H1 (cell line): ENCODE measurements at regions of chr10 and their contacts with region 1.

Region 1: DNA sequence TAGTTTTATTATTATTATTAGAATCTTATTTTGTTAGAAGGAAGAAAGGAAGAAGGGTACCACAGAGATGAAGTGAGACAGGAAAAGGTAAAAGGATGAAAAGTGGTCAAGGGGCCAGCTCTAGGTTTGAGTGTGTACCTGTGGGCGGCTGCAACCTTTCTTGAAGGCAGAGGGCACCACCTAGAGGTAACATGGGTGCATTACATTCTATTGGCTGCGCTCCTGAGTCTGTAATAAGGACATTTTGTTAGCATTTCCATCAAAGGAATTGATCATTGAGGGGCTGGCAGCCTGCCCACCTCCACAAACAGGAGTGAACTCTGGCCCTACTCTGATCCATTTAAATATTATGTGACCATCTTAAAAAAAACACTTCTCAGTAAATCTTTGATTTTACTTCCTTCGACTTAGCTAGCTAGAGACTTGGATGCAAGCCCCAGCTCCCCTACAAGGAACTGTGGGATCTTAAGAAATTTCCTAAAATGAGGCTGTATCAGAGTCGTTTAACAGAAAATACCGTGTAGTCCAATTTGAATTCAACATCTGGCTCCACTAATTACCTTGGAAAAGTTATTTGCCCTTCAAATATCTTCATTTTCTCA is 610.4 kb downstream of the IPMK start:
- DNase-seq: peak; percentile 54 to 76
- H3K4me3 ChIP-seq: no peak overlapping the region
- H3K27ac ChIP-seq: no peak overlapping the region
- H3K4me1 ChIP-seq: no peaks in the 10 kb centered on the region; a peak in 1 of 7 replicates
- H3K27me3 ChIP-seq: no peaks in the 10 kb centered on the region
- CTCF ChIP-seq: peak; percentile 66 to 89 (median 87)
- EP300 ChIP-seq: no peak
- POLR2A ChIP-seq: no peak
- RAD21 ChIP-seq: peak; percentile 95 to 96

Region 2: GRCh38 chr10:57338823-57339558 is 318.3 kb before region 1 on chr10:
- CTCF ChIA-PET with region 1: interaction called, 27 read pairs
- POLR2A ChIA-PET with region 1: no interaction called
- DNase-seq: peak in 1 of 2 experiments; percentile 44
- H3K4me3 ChIP-seq: no peak overlapping the region
- H3K27ac ChIP-seq: no peak overlapping the region
- H3K4me1 ChIP-seq: no peaks in the 10 kb centered on the region
- H3K27me3 ChIP-seq: no peaks in the 10 kb centered on the region
- CTCF ChIP-seq: peak in 2 of 3 experiments; percentile 57 to 58; a peak in 2 of 4 replicates
- EP300 ChIP-seq: no peak
- POLR2A ChIP-seq: no peak
- RAD21 ChIP-seq: peak; percentile 63 to 77

Region 3: GRCh38 chr10:57579926-57580325 is 77.3 kb before region 1 on chr10:
- CTCF ChIA-PET with region 1: interaction called, 160 read pairs
- POLR2A ChIA-PET with region 1: no interaction called
- DNase-seq: peak in 1 of 2 experiments; percentile 21
- H3K4me3 ChIP-seq: no peak overlapping the region
- H3K27ac ChIP-seq: no peak overlapping the region
- H3K4me1 ChIP-seq: no peaks in the 10 kb centered on the region
- H3K27me3 ChIP-seq: no peaks in the 10 kb centered on the region
- CTCF ChIP-seq: peak; percentile 3 to 75 (median 74)
- EP300 ChIP-seq: no peak
- POLR2A ChIP-seq: no peak
- RAD21 ChIP-seq: peak; percentile 94

Region 4: DNA sequence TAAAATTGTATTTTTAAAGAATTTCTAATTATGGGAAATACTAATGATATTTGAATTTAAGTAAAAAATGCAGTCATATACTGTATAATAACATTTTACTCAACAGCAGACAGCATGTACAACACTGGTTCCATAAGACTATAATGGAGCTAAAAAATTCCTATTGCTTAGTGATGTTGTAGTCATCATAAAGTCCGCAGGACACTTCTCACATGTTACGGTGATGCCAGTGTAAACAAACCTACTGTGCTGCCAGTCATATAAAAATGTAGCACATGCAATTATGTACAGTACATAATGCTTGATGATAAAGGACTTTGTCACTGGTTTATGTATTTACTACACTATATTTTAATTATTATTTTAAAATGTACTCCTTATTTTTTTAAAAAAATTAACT is 18.9 kb before region 1 on chr10:
- CTCF ChIA-PET with region 1: interaction called, 19 read pairs
- POLR2A ChIA-PET with region 1: no interaction called
- DNase-seq: no peak
- H3K4me3 ChIP-seq: no peak overlapping the region
- H3K27ac ChIP-seq: no peak overlapping the region
- H3K4me1 ChIP-seq: no peaks in the 10 kb centered on the region
- H3K27me3 ChIP-seq: peaks cover 0 to 1% (median 0%) of the 10 kb centered on the region in 4 experiments; a peak in 1 of 7 replicates
- CTCF ChIP-seq: no peak
- EP300 ChIP-seq: no peak
- POLR2A ChIP-seq: no peak
- RAD21 ChIP-seq: no peak

Region 5: DNA sequence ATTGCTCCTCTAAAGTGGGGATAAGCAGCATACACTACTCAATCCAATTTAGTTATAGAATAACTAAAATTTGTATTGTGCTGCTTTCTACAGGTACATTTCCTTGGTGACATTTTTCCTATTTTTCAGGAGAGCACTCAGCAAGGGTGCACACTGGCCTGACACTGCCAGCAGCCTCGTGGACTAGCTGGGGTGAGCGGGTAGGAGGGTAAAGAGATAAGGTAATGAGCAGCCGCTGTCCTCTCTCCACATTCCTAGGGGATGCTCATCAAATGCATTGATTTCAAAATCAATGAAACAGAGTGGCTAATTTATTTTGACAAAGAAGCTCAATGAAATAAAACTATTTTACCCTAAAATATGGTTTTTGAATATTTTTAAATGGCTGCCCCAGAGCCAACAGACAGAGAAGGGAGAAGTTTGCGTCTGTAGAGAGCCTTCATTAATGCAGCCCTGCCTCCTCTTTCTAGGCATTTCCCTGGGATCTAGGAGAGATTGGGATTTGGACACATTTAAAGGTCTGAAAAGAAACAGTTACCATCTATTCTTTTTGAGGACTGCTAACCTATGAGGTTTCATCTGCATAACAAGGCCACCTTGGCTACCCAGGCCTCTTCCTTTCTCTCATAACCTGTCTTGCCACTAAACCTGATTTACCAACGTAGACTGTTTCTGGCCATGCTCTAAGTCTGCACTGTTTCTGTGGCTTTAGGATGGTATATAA is 49.5 kb after region 1 on chr10:
- CTCF ChIA-PET with region 1: no interaction called
- POLR2A ChIA-PET with region 1: no interaction called
- DNase-seq: no peak
- H3K4me3 ChIP-seq: peak overlapping the region in 1 of 4 experiments; percentile 3; a peak in 2 of 8 replicates
- H3K27ac ChIP-seq: no peak overlapping the region
- H3K4me1 ChIP-seq: peaks cover 0 to 8% (median 2%) of the 10 kb centered on the region in 4 experiments; a peak in 3 of 7 replicates
- H3K27me3 ChIP-seq: no peaks in the 10 kb centered on the region
- CTCF ChIP-seq: no peak
- EP300 ChIP-seq: no peak
- POLR2A ChIP-seq: no peak
- RAD21 ChIP-seq: no peak

Region 6: GRCh38 chr10:57791546-57791945 is 134.3 kb after region 1 on chr10:
- CTCF ChIA-PET with region 1: no interaction called
- POLR2A ChIA-PET with region 1: no interaction called
- DNase-seq: no peak
- H3K4me3 ChIP-seq: no peak overlapping the region
- H3K27ac ChIP-seq: no peak overlapping the region
- H3K4me1 ChIP-seq: peaks cover 0 to 5% (median 1%) of the 10 kb centered on the region in 4 experiments; a peak in 4 of 7 replicates
- H3K27me3 ChIP-seq: no peaks in the 10 kb centered on the region
- CTCF ChIP-seq: no peak
- EP300 ChIP-seq: no peak
- POLR2A ChIP-seq: no peak
- RAD21 ChIP-seq: no peak

Region 7: GRCh38 chr10:57849691-57850357 is 192.6 kb after region 1 on chr10:
- CTCF ChIA-PET with region 1: interaction called, 19 read pairs
- POLR2A ChIA-PET with region 1: no interaction called
- DNase-seq: no peak
- H3K4me3 ChIP-seq: no peak overlapping the region
- H3K27ac ChIP-seq: no peak overlapping the region
- H3K4me1 ChIP-seq: 0 out of 7 replicates have a peak, but pooled peaks cover 0 to 2% (median 0%) of the 10 kb centered on the region in 4 experiments
- H3K27me3 ChIP-seq: no peaks in the 10 kb centered on the region
- CTCF ChIP-seq: peak in 1 of 3 experiments; percentile 40; a peak in 1 of 4 replicates
- EP300 ChIP-seq: no peak
- POLR2A ChIP-seq: no peak
- RAD21 ChIP-seq: peak; percentile 49 to 61

Region 8: DNA sequence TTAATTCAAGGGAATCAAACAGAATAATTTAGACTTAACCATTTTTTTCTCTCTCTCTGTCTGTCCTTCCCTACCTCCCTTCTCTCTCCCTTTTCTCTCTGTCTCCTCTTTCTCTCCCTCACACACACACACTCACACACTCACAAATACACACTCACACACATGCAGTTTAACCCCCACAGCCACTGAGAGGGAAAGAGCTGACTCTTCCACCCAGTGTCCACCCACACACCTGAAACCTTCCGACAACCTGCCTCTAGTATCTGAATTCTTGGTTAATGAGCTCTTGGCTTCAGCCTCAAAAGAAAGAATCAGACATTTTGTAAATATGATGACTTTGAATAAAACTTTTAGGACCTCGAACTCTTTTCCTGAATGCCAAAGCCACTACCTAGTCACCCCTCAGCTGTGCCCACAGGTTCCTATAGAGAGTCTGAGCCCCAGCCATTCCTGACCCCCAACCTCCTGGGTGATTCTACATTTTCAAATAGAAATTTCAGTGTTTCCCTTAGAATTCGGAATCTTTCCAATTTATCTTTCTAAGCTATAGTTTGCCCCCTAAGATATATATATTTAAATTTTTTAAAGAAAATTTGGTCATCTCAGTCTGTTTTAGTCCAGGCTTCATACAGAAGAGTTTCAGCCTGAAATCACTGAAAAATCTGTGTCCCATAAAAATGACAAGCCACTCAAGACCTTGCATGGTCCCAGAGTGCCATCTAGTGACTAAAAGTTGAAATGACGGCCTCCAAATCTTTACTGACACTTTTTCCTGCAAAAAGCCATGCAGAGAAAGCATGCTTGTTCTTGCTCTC is 407.7 kb after region 1 on chr10:
- CTCF ChIA-PET with region 1: interaction called, 48 read pairs
- POLR2A ChIA-PET with region 1: no interaction called
- DNase-seq: peak in 1 of 2 experiments; percentile 52
- H3K4me3 ChIP-seq: no peak overlapping the region
- H3K27ac ChIP-seq: no peak overlapping the region
- H3K4me1 ChIP-seq: peaks cover 0 to 9% (median 7%) of the 10 kb centered on the region in 4 experiments; a peak in 6 of 7 replicates
- H3K27me3 ChIP-seq: no peaks in the 10 kb centered on the region
- CTCF ChIP-seq: peak in 2 of 3 experiments; percentile 73 to 77; a peak in 3 of 4 replicates
- EP300 ChIP-seq: no peak
- POLR2A ChIP-seq: no peak
- RAD21 ChIP-seq: peak; percentile 98 to 99